ENCODE measurements at regions of chr6 and their contacts with region 1.

Region 1: DNA sequence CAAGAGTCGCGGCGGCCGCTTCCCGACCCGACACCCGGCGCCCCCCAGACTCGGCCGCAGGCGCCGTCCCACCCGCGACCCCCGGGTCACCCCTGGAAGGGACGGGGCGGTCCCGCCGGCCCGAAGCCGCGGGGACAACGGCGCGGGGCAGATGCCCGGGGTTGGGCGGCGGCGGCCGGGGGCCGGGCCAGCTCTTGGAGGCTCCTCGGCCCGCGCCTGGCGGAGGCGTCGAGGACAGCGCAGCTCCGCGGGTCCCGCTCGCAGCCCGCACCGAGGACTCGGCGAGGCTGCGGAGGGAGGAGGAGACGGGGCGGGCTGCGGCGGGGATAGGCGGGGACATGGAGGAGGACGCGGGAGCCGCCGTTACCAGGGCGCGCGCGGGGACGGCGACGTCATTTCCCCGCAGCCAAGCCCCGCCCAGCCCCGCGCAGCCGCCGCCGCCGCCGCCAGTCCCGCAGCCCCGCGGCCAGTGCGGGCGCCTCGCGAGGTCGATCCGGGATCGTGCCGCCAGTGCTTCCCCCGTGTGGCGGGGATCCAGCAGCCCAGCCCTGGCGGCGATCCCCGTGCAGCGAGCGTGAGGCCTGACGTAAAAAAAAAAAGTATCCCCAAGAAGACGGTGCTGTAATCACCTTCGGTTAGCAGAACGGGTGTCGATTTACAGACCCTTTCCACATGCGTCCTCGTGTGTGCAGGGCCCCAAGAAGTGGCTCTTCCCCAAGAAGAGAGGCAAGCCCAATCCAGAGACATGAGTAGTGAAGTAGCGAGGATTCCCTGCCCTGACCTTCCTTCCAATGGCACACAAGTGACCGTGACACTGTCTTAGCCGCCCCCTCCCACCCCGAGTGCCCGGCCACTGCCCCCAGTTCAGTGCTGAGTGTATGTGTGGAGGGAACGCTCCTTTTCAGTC is at the start of gene FAM184A:
- DNase-seq: peak; percentile 73
- ATAC-seq: peak; percentile 80
- H3K4me3 Mint-ChIP-seq: peak within 1 kb of the TSS; percentile 91
- H3K27ac Mint-ChIP-seq: peak within 1 kb of the TSS; percentile 77
- H3K4me1 Mint-ChIP-seq: peaks cover 29% of the 10 kb centered on the region
- H3K27me3 Mint-ChIP-seq: peaks cover 48% of the 10 kb centered on the region
- CTCF ChIP-seq: no peak
- total RNA-seq, gene FAM184A: 13.3 to 19.2 TPM (median 16.2 TPM) in 3 replicates

Region 2: DNA sequence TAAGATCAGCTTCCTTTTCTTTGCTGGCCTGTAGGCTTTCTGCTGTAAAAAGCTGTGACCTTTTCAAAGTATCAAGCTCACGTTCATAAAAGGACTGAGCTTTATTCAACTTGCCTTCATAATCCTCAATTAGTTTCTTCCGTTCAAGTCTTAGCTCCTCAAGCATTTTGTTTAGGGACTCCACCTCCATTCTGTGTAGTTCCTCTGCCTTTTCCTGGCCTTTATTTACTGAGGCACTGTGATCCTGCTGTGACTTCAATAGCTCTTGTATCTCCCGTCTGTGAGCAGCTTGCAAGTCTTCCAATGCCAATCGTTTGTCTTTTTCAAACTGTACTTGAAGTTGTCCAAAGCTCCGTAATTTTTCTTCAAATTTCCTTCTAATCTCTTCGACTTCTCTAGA is 54.5 kb before region 1 on chr6:
- CTCF ChIA-PET with region 1: interaction called, 18 read pairs
- POLR2A ChIA-PET with region 1: interaction called, 4 read pairs
- DNase-seq: no peak
- ATAC-seq: peak; percentile 71
- H3K4me3 Mint-ChIP-seq: peak overlapping the region; percentile 43
- H3K27ac Mint-ChIP-seq: peak overlapping the region; percentile 66
- H3K4me1 Mint-ChIP-seq: peaks cover 61% of the 10 kb centered on the region
- H3K27me3 Mint-ChIP-seq: peaks cover 23% of the 10 kb centered on the region
- CTCF ChIP-seq: no peak

Region 3: GRCh38 chr6:119147101-119148053 is 68.7 kb after region 1 on chr6:
- CTCF ChIA-PET with region 1: no interaction called
- POLR2A ChIA-PET with region 1: no interaction called
- DNase-seq: no peak
- ATAC-seq: no peak
- H3K4me3 Mint-ChIP-seq: no peak overlapping the region
- H3K27ac Mint-ChIP-seq: no peak overlapping the region
- H3K4me1 Mint-ChIP-seq: peaks cover 4% of the 10 kb centered on the region
- H3K27me3 Mint-ChIP-seq: no peaks in the 10 kb centered on the region
- CTCF ChIP-seq: no peak

Measured in WTC11 (cell line).